A673 (cell line): ENCODE measurements at regions of chr4 and their contacts with region 1.

Region 1: DNA sequence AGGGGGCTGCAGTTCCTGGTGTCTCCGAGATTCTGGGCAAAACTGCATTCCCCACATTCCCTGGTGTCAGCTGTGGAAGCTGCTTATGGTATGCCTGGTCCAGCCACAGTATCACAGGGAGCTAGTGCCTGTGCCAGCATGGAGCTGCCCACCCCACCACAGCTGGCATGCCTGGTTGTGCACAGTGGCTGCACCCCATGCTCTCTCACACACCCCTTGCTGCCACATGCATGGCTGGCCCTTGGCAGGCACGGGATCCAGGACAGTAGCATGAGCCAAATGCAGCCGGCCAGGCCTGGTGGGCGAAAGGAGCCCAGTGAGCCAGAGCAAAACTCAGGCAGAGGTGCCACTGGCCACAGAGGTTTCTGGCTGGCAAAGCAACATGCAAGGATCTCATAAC is 418.0 kb upstream of the SPOCK3 start:
- DNase-seq: no peak
- H3K4me3 ChIP-seq: no peak overlapping the region
- H3K27ac ChIP-seq: no peak overlapping the region
- H3K4me1 ChIP-seq: no peaks in the 10 kb centered on the region
- H3K27me3 ChIP-seq: no peaks in the 10 kb centered on the region
- CTCF ChIP-seq: no peak

Region 2: DNA sequence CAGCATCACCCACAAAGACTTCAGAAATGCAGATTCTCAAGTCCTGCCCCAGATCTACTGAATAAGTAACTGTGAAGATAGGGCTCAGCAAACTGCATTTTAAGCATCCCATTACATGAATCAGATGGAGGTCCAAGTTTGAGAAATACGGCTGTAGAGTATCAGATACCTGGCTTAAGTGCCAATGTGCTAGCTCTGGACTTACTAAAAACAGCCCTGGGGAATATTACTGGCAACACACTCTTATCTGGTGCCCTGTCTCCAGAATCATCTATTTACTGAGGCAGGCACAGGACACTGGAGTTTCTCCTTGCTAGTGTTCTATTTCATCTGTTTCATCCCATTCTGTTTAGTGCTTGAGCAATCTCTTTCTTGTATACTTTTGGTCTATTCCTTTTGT is 523.1 kb before region 1 on chr4:
- CTCF ChIA-PET with region 1: no interaction called
- POLR2A ChIA-PET with region 1: interaction called, 14 read pairs
- intact Hi-C with region 1: no loop called
- DNase-seq: no peak
- H3K4me3 ChIP-seq: no peak overlapping the region
- H3K27ac ChIP-seq: no peak overlapping the region
- H3K4me1 ChIP-seq: no peaks in the 10 kb centered on the region
- H3K27me3 ChIP-seq: no peaks in the 10 kb centered on the region
- CTCF ChIP-seq: no peak